Activated CD4-positive, alpha-beta T cell treated with anti-CD3 and anti-CD28 coated beads, Interleukin-2, amount 10 ng/mL, durations not matched to agents 24 days and 14 days (primary cell): ENCODE measurements at regions of chr5 and their contacts with region 1.

Region 1: DNA sequence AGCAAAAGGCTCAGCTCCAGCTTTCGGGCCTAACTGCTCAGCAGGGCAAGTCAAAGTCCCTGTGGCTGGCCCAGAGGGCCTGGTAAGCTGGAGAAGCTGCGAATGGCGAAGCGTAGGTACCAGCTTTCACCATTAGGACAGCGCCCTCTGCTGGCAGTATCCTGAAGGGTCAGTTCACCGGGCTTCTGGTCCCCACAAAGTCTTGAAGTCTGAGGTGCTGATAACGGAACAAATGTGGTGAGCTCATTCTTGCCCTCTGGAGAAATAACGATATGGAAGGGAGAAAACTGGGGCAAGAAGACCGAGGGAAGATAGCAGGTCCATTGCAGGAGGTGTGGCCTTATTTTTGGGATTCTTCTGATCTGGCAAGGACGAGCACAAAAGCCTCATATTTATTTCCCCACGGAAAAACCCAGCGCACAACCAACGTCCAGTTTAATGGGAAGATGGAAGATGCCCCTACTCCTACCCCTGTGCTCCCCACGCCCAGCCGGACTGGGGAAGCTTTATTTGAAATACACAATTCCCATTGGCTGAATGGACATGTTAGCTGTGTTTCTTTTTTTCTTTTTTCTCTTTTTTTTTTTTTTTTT is 7.2 kb downstream of the SOWAHA start:
- DNase-seq: peak; percentile 97
- H3K4me3 Mint-ChIP-seq: peak overlapping the region; percentile 37
- H3K27ac Mint-ChIP-seq: no peak overlapping the region
- H3K4me1 Mint-ChIP-seq: peaks cover 15% of the 10 kb centered on the region
- H3K27me3 Mint-ChIP-seq: peaks cover 39% of the 10 kb centered on the region

Region 2: GRCh38 chr5:132500931-132501630 is 319.2 kb before region 1 on chr5:
- intact Hi-C with region 1: loop called (anchors 1 kb)
- DNase-seq: peak; percentile 92
- H3K4me3 Mint-ChIP-seq: no peak overlapping the region
- H3K27ac Mint-ChIP-seq: peak overlapping the region; percentile 65
- H3K4me1 Mint-ChIP-seq: peaks cover 43% of the 10 kb centered on the region
- H3K27me3 Mint-ChIP-seq: peaks cover 2% of the 10 kb centered on the region

Region 3: GRCh38 chr5:132506094-132506692 is 314.1 kb before region 1 on chr5:
- intact Hi-C with region 1: loop called (anchors 1 kb)
- DNase-seq: peak; percentile 74
- H3K4me3 Mint-ChIP-seq: no peak overlapping the region
- H3K27ac Mint-ChIP-seq: no peak overlapping the region
- H3K4me1 Mint-ChIP-seq: peaks cover 27% of the 10 kb centered on the region
- H3K27me3 Mint-ChIP-seq: peaks cover 10% of the 10 kb centered on the region

Region 4: DNA sequence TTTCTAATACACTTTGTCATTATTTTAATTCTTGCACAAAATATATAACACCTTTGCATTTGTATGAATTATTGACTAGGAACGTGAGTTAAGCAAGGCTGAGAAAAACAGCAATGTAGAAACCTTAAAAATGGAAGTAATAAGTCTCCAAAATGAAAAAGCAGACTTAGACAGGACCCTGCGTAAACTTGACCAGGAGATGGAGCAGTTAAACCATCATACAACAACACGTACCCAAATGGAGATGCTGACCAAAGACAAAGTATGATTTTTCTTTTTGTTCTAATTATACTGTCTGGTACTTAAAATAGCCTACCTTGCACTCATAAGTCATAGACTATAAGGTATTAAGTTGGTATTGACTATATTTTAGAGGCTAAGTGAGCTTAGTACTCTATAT is 229.1 kb before region 1 on chr5:
- intact Hi-C with region 1: loop called (anchors 1 kb)
- DNase-seq: no peak
- H3K4me3 Mint-ChIP-seq: no peak overlapping the region
- H3K27ac Mint-ChIP-seq: no peak overlapping the region
- H3K4me1 Mint-ChIP-seq: peaks cover 18% of the 10 kb centered on the region
- H3K27me3 Mint-ChIP-seq: no peaks in the 10 kb centered on the region

Region 5: DNA sequence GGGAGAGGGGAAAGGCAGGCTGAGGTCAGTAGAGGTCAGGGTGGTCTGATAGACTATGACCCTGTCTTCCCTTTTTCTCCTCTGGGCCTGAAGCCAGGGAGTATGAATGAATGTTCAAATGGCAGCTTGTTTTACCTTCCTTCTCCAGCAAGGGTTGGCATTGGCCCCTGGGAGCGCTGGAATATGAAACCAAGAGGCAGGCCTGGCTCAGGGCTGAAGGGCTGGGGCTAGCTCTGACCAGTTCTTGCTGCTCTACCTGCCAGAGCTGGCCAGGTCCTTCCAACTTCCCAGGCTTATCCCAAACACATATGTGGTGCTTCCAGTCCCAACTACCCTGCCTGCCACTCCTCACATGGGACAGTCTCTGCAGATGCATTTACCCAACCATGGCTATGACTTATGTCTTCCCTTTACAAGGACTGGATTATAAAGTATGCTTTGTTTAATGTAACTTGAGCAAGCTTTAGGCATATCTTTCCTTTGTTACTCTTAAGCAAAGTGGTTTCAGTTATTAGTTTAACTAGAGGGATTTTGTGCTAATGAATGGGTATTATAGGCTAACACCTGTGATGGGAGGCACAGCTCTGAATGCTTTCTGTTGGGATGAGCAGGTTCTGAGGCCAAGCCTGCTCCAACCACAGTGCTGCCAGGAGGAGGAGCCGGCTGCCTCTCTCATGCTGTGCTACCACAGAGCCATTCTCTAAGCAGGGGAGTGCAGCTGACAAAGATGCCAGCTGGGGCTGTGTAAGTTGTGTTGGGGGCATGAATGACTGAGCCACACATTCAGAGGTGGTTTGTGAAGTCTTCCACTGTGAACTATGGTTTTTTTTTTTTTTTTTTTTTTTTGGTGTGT is 66.9 kb before region 1 on chr5:
- intact Hi-C with region 1: loop called (anchors 2 kb)
- DNase-seq: peak; percentile 74
- H3K4me3 Mint-ChIP-seq: no peak overlapping the region
- H3K27ac Mint-ChIP-seq: peak overlapping the region; percentile 82
- H3K4me1 Mint-ChIP-seq: peaks cover 57% of the 10 kb centered on the region
- H3K27me3 Mint-ChIP-seq: no peaks in the 10 kb centered on the region

Region 6: DNA sequence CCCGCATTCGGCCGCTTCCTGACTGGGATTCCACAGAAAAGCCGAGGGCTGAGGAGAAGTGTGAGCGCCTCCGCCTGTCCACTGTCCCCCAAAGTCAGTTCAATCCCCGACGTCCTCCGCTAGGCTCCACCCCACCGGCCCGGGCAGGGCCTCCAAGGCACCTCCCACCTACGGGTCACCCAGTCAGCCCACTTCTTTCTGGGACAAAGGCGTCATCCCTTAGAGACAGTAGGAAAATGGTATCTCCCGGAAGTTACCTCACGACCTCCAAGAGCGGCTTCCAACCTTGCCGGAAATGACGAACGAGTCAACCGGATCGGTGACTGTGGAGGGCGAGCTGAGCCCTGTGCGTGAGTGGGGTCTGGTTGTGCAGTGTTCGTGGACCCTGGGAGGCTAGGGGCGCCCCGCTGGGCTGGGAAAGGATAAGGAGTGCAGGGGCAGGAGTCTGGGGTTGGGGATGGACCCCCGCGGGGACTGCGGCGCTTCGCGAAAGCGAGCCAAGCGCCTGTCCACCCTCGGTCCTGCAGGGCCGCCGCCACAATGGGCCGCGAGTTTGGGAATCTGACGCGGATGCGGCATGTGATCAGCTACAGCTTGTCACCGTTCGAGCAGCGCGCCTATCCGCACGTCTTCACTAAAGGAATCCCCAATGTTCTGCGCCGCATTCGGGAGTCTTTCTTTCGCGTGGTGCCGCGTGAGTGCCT is 46.2 kb after region 1 on chr5 and contains the starts of genes GDF9 and UQCRQ:
- intact Hi-C with region 1: no loop called
- DNase-seq: peak; percentile 98
- H3K4me3 Mint-ChIP-seq: peak within 1 kb of the TSS; percentile 95
- H3K27ac Mint-ChIP-seq: peak within 1 kb of the TSS; percentile 99
- H3K4me1 Mint-ChIP-seq: peaks cover 24% of the 10 kb centered on the region
- H3K27me3 Mint-ChIP-seq: peaks cover 9% of the 10 kb centered on the region
- total RNA-seq, gene GDF9: 0.30 and 0.45 TPM in 2 replicates
- total RNA-seq, gene UQCRQ: 454 and 464 TPM in 2 replicates